Caco-2 (cell line): ENCODE measurements at regions of chr6 and their contacts with region 1.

Region 1: DNA sequence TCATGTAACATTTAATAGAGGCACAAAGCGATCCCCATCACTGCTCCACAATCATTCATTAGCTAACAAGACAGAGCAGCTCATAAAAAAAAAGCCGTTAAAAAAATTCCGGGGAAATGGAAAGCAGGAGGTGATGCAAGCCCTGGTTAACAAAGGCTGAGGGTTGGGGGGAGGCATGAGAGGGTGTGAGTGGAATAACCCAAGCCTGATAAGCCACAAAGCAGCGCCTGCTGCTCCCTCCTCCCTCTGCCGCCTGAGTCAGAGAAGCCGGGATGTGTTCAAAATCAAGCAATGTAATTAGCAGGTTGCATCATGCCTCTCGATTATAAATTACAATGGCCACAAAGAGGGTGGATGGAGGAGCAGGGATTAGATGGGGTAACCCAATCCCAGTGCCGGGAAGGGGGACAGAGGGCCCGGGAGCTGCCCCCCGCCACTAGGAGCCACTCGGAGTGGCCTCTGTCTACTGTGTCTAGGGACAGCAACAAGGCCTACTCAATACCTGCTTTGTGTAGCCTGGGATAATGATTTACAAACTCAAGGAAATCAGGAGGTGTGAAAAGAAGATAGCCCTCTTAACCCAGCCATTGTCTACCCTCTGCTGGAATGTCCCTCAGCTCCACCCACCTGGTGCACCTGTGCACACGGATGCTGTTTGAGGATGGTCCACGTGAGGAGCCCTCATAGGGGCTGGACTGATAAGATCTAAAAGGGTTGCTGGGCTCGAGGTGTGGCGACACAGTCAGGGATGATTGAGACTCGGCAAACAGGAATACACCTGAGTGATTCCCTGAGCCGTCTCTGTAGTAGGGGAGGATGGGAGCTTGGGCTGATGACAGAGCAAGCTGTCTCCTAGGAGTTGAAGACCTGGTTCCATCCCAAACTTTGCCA is 156.9 kb downstream of the VEGFA start:
- DNase-seq: peak; percentile 97 to 99
- H3K4me3 ChIP-seq: no peak overlapping the region
- H3K4me3 Mint-ChIP-seq: peak overlapping the region; percentile 57
- H3K27ac Mint-ChIP-seq: peak overlapping the region; percentile 97
- H3K4me1 ChIP-seq: peaks cover 23% of the 10 kb centered on the region
- H3K4me1 Mint-ChIP-seq: peaks cover 6% of the 10 kb centered on the region
- H3K27me3 ChIP-seq: no peaks in the 10 kb centered on the region
- H3K27me3 Mint-ChIP-seq: no peaks in the 10 kb centered on the region
- CTCF ChIP-seq: peak in 1 of 2 experiments; percentile 18

Region 2: DNA sequence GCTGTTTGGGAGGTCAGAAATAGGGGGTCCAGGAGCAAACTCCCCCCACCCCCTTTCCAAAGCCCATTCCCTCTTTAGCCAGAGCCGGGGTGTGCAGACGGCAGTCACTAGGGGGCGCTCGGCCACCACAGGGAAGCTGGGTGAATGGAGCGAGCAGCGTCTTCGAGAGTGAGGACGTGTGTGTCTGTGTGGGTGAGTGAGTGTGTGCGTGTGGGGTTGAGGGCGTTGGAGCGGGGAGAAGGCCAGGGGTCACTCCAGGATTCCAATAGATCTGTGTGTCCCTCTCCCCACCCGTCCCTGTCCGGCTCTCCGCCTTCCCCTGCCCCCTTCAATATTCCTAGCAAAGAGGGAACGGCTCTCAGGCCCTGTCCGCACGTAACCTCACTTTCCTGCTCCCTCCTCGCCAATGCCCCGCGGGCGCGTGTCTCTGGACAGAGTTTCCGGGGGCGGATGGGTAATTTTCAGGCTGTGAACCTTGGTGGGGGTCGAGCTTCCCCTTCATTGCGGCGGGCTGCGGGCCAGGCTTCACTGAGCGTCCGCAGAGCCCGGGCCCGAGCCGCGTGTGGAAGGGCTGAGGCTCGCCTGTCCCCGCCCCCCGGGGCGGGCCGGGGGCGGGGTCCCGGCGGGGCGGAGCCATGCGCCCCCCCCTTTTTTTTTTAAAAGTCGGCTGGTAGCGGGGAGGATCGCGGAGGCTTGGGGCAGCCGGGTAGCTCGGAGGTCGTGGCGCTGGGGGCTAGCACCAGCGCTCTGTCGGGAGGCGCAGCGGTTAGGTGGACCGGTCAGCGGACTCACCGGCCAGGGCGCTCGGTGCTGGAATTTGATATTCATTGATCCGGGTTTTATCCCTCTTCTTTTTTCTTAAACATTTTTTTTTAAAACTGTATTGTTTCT is 157.1 kb before region 1 on chr6 and contains the start of gene VEGFA:
- CTCF ChIA-PET with region 1: interaction called, 15 read pairs
- POLR2A ChIA-PET with region 1: interaction called, 19 read pairs
- intact Hi-C with region 1: loop called (anchors 1 kb)
- DNase-seq: peak; percentile 88 to 92
- H3K4me3 ChIP-seq: peak within 1 kb of the TSS; percentile 95
- H3K4me3 Mint-ChIP-seq: peak within 1 kb of the TSS; percentile 96
- H3K27ac Mint-ChIP-seq: peak within 1 kb of the TSS; percentile 92
- H3K4me1 ChIP-seq: peaks cover 37% of the 10 kb centered on the region
- H3K4me1 Mint-ChIP-seq: peaks cover 24% of the 10 kb centered on the region
- H3K27me3 ChIP-seq: no peaks in the 10 kb centered on the region
- H3K27me3 Mint-ChIP-seq: no peaks in the 10 kb centered on the region
- CTCF ChIP-seq: peak; percentile 92 to 97
- total RNA-seq, gene VEGFA: 172 and 174 TPM in 2 replicates

Region 3: GRCh38 chr6:43838276-43839036 is 88.4 kb before region 1 on chr6:
- CTCF ChIA-PET with region 1: interaction called, 3 read pairs
- POLR2A ChIA-PET with region 1: interaction called, 3 read pairs
- intact Hi-C with region 1: loop called (anchors 1 kb)
- DNase-seq: peak; percentile 64 to 70
- H3K4me3 ChIP-seq: no peak overlapping the region
- H3K4me3 Mint-ChIP-seq: peak overlapping the region; percentile 52
- H3K27ac Mint-ChIP-seq: peak overlapping the region; percentile 92
- H3K4me1 ChIP-seq: peaks cover 63% of the 10 kb centered on the region
- H3K4me1 Mint-ChIP-seq: peaks cover 31% of the 10 kb centered on the region
- H3K27me3 ChIP-seq: no peaks in the 10 kb centered on the region
- H3K27me3 Mint-ChIP-seq: no peaks in the 10 kb centered on the region
- CTCF ChIP-seq: peak; percentile 62 to 72

Region 4: DNA sequence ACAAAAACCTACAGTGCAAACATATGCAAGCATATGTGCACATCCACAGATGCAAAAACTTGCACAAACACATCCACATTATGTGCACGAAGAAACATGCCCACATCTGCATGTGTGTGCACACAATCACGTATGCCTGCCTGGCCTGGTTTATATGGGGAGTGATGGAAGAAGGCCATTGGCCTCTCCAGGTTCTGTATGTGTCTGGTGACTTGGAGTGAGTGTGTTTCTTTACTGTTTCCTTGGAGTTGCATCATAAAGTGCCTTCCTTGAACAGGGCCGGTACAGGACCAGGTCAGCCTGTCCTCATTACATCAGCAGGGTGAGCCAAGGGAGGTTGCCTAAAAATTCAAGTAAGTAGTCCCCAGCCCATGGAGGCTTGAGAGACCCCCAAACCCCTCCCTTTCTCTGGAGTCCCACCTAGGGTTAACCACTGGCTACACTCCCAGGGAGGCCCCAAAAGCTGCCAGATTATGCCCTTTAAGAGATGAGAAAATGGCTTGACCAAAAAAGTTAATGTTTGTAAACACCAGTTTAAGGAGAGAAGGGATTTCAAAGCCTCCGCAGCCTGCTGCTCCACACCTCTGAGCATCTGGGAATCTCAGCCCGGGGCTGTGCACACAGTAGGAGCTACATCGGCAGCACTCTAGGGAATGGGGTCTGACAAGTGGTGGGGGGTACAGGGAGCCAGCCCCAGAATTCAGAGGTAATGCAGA is 16.1 kb before region 1 on chr6:
- CTCF ChIA-PET with region 1: interaction called, 16 read pairs
- POLR2A ChIA-PET with region 1: interaction called, 22 read pairs
- intact Hi-C with region 1: loop called (anchors 1 kb)
- DNase-seq: peak in 1 of 2 experiments; percentile 75
- H3K4me3 ChIP-seq: no peak overlapping the region
- H3K4me3 Mint-ChIP-seq: peak overlapping the region; percentile 18
- H3K27ac Mint-ChIP-seq: peak overlapping the region; percentile 94
- H3K4me1 ChIP-seq: peaks cover 39% of the 10 kb centered on the region
- H3K4me1 Mint-ChIP-seq: peaks cover 22% of the 10 kb centered on the region
- H3K27me3 ChIP-seq: no peaks in the 10 kb centered on the region
- H3K27me3 Mint-ChIP-seq: no peaks in the 10 kb centered on the region
- CTCF ChIP-seq: no peak

Region 5: GRCh38 chr6:43951063-43951755 is 24.3 kb after region 1 on chr6:
- CTCF ChIA-PET with region 1: interaction called, 20 read pairs
- POLR2A ChIA-PET with region 1: interaction called, 4 read pairs
- intact Hi-C with region 1: loop called (anchors 1 kb)
- DNase-seq: peak; percentile 75 to 82
- H3K4me3 ChIP-seq: no peak overlapping the region
- H3K4me3 Mint-ChIP-seq: no peak overlapping the region
- H3K27ac Mint-ChIP-seq: no peak overlapping the region
- H3K4me1 ChIP-seq: 0 out of 2 replicates have a peak, but pooled peaks cover 3% of the 10 kb centered on the region
- H3K4me1 Mint-ChIP-seq: no peaks in the 10 kb centered on the region
- H3K27me3 ChIP-seq: no peaks in the 10 kb centered on the region
- H3K27me3 Mint-ChIP-seq: no peaks in the 10 kb centered on the region
- CTCF ChIP-seq: peak; percentile 59 to 89

Region 6: DNA sequence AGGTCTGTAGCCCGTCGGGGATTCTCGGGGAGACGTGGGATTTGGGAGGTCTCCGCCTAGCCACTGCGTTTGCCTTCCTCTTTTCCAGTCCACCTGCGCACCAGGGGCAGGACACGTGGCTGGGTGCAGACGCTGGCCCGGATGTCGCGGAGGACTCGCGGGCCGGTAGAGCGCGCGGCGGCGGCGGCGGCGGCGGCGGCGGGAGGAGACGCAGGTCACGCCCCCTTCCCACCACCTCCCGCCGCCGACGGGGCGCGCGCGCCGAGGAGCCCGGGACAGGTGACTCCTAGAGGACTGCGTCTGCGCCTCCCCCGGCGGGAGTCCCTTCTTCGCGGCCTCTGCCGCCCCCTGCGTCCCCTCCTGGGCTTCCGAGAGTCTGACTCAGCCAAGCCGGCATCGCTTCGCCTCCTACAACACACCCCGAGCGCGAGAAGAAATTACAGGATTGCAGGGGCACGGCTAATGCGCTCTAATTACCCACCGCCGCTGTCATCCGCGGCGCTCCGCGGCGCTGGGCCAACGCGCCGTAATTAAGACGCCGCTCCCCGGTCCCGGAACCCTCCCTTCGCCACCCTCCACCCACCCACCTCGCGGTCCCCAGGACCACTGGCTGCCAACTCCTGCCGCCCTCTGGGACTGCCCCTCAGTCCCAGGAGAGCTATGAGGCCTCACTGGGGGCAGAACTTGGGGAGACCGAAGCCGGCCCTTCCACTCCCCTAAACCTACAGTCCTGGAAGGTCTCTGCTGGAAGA is 75.9 kb after region 1 on chr6:
- CTCF ChIA-PET with region 1: interaction called, 4 read pairs
- POLR2A ChIA-PET with region 1: interaction called, 3 read pairs
- intact Hi-C with region 1: loop called (anchors 1 kb)
- DNase-seq: peak; percentile 84 to 86
- H3K4me3 ChIP-seq: peak overlapping the region; percentile 49
- H3K4me3 Mint-ChIP-seq: peak overlapping the region; percentile 66
- H3K27ac Mint-ChIP-seq: peak overlapping the region; percentile 75
- H3K4me1 ChIP-seq: peaks cover 21% of the 10 kb centered on the region
- H3K4me1 Mint-ChIP-seq: no peaks in the 10 kb centered on the region
- H3K27me3 ChIP-seq: no peaks in the 10 kb centered on the region
- H3K27me3 Mint-ChIP-seq: no peaks in the 10 kb centered on the region
- CTCF ChIP-seq: peak; percentile 15 to 52